Activated CD4-positive, alpha-beta T cell treated with anti-CD3 and anti-CD28 coated beads for 36 hours (primary cell): ENCODE measurements at regions of chrX and their contacts with region 1.

Region 1: GRCh38 chrX:103464774-103465117 is 54.5 kb downstream of the RAB40A start:
- DNase-seq: peak; percentile 83
- ATAC-seq: peak; percentile 89
- H3K4me3 Mint-ChIP-seq: peak overlapping the region; percentile 75
- H3K27ac Mint-ChIP-seq: peak overlapping the region; percentile 83
- H3K4me1 Mint-ChIP-seq: peaks cover 4% of the 10 kb centered on the region
- H3K27me3 Mint-ChIP-seq: peaks cover 2% of the 10 kb centered on the region

Region 2: DNA sequence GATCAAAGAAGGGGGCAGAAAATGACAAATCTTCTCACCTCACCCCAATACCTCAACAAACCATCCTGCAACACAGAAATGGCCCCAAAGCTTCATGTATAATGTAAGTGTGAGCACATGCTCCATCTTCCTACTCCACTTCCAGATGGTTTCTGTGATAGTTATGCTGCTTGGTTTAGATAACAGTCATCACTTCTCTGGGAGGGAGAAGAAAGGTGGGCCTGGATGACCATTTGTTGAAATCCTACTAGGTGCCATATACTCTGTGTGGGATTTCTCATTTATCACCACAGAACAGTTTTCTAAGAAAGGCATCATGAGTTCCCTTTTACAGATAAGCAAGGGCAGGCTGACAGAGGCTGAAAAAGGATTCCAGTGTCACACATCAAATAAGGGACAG is 340.5 kb before region 1 on chrX:
- CTCF ChIA-PET with region 1: no interaction called
- POLR2A ChIA-PET with region 1: no interaction called
- intact Hi-C with region 1: no loop called
- DNase-seq: no peak
- ATAC-seq: no peak
- H3K4me3 Mint-ChIP-seq: no peak overlapping the region
- H3K27ac Mint-ChIP-seq: no peak overlapping the region
- H3K4me1 Mint-ChIP-seq: peaks cover 2% of the 10 kb centered on the region
- H3K27me3 Mint-ChIP-seq: no peaks in the 10 kb centered on the region

Region 3: GRCh38 chrX:103343105-103343504 is 121.6 kb before region 1 on chrX:
- CTCF ChIA-PET with region 1: interaction called, 28 read pairs
- POLR2A ChIA-PET with region 1: interaction called, 3 read pairs
- intact Hi-C with region 1: loop called (anchors 1 kb)
- DNase-seq: peak; percentile 56
- ATAC-seq: peak; percentile 53
- H3K4me3 Mint-ChIP-seq: no peak overlapping the region
- H3K27ac Mint-ChIP-seq: no peak overlapping the region
- H3K4me1 Mint-ChIP-seq: no peaks in the 10 kb centered on the region
- H3K27me3 Mint-ChIP-seq: no peaks in the 10 kb centered on the region

Region 4: DNA sequence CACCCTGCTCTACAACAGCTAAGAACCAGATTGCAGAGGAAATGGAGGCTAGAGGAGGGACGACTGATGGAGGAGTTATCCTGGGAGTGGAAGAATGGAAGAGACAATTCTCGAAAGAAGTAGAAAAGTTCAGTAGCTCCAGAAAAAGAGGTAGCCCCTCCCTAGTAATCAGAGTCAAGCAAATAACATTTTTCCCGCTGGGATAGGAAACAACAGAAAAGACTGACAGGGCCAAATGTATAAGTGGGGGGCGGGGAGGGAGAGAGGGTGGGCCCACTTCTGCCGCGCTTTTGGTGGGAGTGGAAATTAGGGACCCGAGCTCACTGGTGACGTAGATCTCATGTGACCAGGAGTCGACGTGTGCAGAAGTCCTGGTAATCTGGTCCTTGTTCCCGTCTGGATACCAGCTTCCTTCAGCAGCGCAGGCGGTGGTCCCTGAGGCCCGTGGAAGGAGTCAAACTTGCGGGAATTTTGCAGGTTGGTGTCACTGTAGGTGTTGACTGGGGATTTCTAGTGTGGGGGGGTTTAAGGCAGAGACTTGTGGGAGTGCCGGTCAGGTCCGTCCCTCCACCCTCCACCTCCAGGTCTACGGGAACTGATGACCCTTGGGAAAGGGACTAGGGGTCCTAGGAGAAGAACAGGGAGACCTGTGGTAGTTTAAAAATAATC is 108.5 kb before region 1 on chrX and contains the start of gene TCEAL9:
- CTCF ChIA-PET with region 1: interaction called, 3 read pairs
- POLR2A ChIA-PET with region 1: no interaction called
- intact Hi-C with region 1: loop called in 1 of 2 experiments (anchors 5 kb)
- DNase-seq: peak; percentile 5
- ATAC-seq: no peak
- H3K4me3 Mint-ChIP-seq: peak within 1 kb of the TSS; percentile 75
- H3K27ac Mint-ChIP-seq: peak within 1 kb of the TSS; percentile 34
- H3K4me1 Mint-ChIP-seq: peaks cover 6% of the 10 kb centered on the region
- H3K27me3 Mint-ChIP-seq: no peaks in the 10 kb centered on the region
- total RNA-seq, gene TCEAL9: 1.5 to 2.3 TPM